Aorta (tissue), 5 donors: ENCODE measurements at regions of chr2 and their contacts with region 1.

Region 1: DNA sequence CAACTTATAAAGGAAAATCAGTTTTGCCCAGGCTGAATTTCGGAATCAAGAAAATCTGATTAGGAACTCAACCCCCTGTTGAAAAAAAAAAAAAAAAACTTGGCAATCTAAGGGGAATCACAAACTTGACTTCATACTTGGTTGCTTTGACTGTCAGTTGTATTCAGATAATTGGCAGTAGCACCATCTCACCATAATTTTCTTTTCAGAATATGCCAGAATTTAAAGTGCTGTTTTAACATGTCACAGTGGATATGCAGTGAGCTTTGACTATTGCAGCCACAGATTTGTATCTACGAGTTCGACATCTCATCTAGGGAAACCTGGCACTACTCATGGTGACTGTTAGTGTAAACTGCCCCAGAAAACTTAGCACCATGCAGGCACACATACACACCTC is 761.4 kb upstream of the KLHL29 start:
- DNase-seq: no peak
- ATAC-seq: no peak
- H3K4me3 ChIP-seq: no peak overlapping the region
- H3K27ac ChIP-seq: no peak overlapping the region
- H3K4me1 ChIP-seq: no peaks in the 10 kb centered on the region
- H3K27me3 ChIP-seq: no peaks in the 10 kb centered on the region

Region 2: DNA sequence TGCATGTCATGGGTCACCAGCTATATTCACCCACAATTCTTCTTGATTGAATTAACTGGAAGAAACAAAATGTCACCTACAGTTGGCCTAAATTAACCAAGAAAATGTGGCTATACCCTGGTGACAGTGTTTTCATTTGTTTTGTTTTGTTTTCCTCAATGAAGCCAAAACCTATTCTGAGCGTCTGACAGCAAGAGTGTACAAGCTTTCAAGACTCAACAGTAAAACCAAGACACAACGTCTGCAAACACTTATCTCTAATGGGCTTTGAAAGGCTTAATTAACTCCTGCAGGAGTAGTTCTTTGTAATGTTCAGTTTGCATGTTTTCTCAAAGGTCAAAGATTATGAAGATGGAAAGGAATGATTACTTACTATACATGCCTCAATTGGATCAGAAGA is 66.2 kb before region 1 on chr2:
- intact Hi-C with region 1: loop called in 1 of 2 experiments (anchors 2 kb)
- DNase-seq: no peak
- ATAC-seq: no peak
- H3K4me3 ChIP-seq: no peak overlapping the region
- H3K27ac ChIP-seq: no peak overlapping the region
- H3K4me1 ChIP-seq: no peaks in the 10 kb centered on the region
- H3K27me3 ChIP-seq: peaks cover 0 to 1% of the 10 kb centered on the region in 2 donors